ENCODE measurements at regions of chr11 and their contacts with region 1.

Region 1: DNA sequence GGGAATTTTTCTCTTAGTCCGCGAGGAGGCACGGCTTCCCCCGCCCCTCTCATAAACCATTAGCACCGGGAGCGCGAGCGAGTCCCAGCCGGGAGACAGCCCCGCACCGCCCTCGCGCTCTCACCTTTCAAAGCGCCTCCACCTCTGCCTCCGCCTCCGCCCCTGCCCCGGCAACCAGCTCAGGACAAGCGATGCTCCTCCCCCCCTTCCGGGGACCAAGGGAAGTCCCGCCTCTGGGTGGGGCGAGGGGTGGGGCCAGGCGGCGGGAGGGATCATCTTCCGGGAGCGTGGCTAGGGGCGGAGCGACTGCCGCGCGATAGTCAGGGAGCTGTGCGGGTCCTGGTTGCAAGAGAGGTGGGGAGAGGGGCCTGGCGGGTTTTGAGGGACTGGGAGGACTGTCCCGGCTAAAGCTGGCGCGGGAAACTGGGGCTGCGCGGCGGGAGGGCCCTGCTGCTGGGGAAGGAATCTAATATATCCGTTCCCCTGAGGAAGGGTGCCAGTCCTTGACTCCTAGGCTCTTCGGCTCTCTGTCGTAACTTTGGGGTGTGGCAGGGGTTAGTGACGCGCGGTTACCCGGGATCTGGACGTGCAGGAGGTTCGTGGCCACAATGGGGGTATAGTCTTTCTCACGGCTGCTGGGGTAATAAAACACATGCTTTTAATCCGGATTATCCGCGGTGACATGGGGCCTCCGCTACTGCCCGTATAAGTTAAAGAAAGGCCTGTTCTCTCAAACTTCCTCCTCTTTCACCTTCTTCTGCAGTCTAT is at the starts of genes CCDC82 and JRKL:
- DNase-seq: peak; percentile 97 to 99
- ATAC-seq: peak; percentile 100
- H3K4me3 ChIP-seq: peak within 1 kb of the TSS; percentile 79 to 99
- H3K27ac ChIP-seq: peak within 1 kb of the TSS in 1 of 2 donors; percentile 16
- H3K4me1 ChIP-seq: peaks cover 0 to 3% of the 10 kb centered on the region in 2 donors
- H3K27me3 ChIP-seq: no peaks in the 10 kb centered on the region
- total RNA-seq, gene CCDC82: 37.4 to 38.7 TPM
- total RNA-seq, gene JRKL: 13.7 to 15.4 TPM

Region 2: GRCh38 chr11:95849087-95849825 is 540.6 kb before region 1 on chr11:
- intact Hi-C with region 1: loop called (anchors 5 to 10 kb)
- DNase-seq: peak in 1 of 2 donors; percentile 59
- ATAC-seq: peak; percentile 86
- H3K4me3 ChIP-seq: no peak overlapping the region
- H3K27ac ChIP-seq: no peak overlapping the region
- H3K4me1 ChIP-seq: no peaks in the 10 kb centered on the region
- H3K27me3 ChIP-seq: no peaks in the 10 kb centered on the region